ENCODE measurements at regions of chr19 and their contacts with region 1.

Region 1: DNA sequence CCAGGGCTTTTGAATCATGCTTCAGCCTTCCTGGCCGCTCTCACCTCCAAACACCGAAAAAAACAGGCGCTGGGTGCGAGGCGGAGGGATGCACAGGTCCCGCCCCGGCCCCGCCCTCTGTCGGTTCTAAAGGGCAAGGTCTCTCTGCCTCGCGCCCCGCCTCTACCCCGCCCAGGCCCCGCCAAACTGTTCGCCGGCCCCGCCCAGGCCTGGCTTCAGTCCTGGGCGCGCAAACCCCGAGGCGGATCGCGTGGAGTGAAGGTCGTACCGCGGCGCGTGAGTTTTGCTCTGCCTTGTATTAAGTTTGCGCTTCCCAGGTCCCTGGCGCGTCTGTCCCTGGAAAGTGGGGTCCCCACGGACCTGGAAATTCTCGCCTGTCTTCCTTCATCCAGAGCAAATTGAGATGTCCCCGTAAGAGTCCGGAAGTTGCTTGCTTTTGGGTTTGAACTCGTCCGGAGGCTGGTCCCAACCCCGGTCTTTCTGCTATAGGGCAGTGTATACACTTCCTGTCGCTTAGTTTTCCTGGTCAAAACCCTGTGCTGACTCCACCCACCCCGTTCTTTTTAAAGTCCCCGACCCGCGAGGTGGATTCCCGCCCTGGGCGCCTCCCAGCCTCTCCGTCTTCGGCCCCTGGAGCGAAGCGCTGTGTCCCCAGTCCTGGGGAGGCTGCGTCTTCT is 8.4 kb downstream of the ZNF808 start:
- DNase-seq: peak; percentile 67
- ATAC-seq: peak; percentile 98
- H3K4me3 ChIP-seq: peak overlapping the region; percentile 92
- H3K27ac ChIP-seq: peak overlapping the region; percentile 76
- H3K4me1 ChIP-seq: no peaks in the 10 kb centered on the region
- H3K27me3 ChIP-seq: no peaks in the 10 kb centered on the region
- CTCF ChIP-seq: peak in 1 of 3 experiments; percentile 14; a peak in 1 of 6 replicates
- EP300 ChIP-seq: 0 out of 4 replicates have a peak, but pooled peaks of 1 of the 2 experiments have one; percentile 11
- POLR2A ChIP-seq: peak; percentile 85
- RAD21 ChIP-seq: no peak

Region 2: DNA sequence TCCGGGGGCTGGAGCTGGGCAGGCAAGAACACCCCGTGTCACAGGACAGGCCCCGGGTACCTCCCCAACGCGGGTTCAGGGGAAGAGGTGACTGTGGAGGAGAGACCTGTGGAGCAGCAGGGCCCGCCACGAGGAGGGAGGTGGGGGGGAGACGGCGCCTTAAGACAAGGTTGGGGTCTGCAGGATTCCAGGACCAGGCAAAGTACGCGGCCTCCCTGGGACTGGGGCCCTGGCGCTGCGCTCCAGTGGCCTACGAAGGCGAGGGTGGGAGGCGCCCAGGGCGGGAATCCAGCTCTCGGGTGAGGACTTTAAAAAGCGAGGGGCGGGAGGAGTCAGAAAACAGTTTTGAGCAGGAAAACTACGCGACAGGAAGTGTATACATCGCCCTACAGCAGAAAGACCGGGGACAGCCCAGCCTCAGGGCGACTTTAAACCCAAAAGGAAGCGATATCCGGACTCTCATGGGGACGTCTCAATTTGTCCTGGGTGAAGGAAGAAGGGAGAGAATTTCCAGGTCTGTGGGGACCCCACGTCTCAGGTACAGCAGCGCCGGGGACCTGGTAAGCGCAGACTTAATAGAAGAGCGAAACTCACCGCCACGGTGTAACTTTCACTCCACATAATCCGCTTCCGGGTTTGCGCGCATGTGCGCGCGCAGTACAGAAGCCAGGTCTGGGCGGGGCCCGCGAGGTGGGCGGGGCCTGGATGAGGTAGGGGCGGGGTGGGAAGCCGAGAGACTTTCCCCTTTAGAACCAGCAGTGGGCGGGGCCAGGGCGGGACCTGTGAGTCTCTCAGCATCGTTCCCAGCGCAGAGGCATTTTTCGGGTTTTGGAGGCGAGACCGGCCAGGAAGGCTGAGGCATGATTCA is 102.0 kb after region 1 on chr19 and contains the start of gene ZNF83:
- CTCF ChIA-PET with region 1: no interaction called
- POLR2A ChIA-PET with region 1: no interaction called
- RAD21 ChIA-PET with region 1: no interaction called
- SMC1A ChIA-PET with region 1: no interaction called
- in situ Hi-C with region 1: no loop called
- intact Hi-C with region 1: loop called (anchors 5 kb)
- DNase-seq: peak; percentile 65
- ATAC-seq: peak; percentile 96
- H3K4me3 ChIP-seq: peak within 1 kb of the TSS; percentile 93
- H3K27ac ChIP-seq: peak within 1 kb of the TSS; percentile 89
- H3K4me1 ChIP-seq: no peaks in the 10 kb centered on the region
- H3K27me3 ChIP-seq: no peaks in the 10 kb centered on the region
- CTCF ChIP-seq: no peak
- EP300 ChIP-seq: no peak
- POLR2A ChIP-seq: peak; percentile 80
- RAD21 ChIP-seq: no peak
- polyA plus RNA-seq, gene ZNF83: 9.9 to 11.3 TPM

Measured in GM12878 (cell line).